ENCODE measurements at regions of chr6 and their contacts with region 1.

Region 1: DNA sequence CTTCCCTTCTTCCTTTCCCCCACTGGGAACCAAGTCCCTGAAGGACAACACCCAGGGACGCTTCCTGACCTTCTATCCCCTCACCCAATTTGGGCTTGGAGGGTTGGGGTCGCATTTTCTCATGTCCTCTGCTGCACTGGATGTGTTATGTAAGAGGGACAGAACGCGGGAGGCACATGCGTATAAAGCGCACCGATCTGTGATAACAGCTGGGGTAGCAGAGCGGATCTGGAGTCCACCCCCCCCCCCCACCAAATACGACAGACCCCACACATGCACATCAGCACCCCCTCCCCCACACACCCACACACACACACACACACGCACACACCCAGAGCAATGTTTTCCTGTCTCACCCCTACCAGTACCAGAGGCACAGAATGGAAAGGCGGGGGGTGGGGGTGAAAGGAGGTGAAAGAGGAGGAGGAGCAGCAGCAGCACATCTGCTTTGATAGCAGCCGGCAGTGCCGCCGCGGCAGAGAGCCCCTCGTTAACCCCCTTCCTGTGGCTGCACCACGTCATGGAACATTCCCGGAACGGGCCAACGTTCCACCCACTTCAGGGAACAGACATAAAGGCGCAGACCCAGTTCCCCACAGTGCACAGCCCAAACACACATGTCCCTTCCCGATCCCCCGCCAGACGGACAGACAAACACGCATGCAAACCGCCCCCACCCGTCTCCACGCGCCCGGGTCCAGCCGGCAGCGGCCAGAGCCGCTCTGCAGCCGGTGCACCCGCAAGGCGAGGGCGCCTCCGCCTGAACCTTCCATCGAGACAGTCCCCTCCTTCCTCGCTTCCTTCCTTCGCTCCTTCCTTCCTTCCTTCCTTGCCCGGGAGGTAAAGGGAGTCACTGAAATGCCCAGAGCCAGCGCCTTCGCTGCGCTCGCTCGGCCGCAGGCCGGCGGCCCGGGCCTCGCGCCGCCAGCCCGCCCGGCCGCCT is 581 bp downstream of the HIVEP2 start:
- DNase-seq: peak; percentile 88
- H3K4me3 ChIP-seq: peak overlapping the region; percentile 90
- CTCF ChIP-seq: no peak

Region 2: GRCh38 chr6:142845624-142846458 is 98.6 kb before region 1 on chr6:
- in situ Hi-C with region 1: loop called (anchors 5 kb)
- DNase-seq: peak; percentile 90
- H3K4me3 ChIP-seq: peak overlapping the region; percentile 15
- CTCF ChIP-seq: no peak

Region 3: DNA sequence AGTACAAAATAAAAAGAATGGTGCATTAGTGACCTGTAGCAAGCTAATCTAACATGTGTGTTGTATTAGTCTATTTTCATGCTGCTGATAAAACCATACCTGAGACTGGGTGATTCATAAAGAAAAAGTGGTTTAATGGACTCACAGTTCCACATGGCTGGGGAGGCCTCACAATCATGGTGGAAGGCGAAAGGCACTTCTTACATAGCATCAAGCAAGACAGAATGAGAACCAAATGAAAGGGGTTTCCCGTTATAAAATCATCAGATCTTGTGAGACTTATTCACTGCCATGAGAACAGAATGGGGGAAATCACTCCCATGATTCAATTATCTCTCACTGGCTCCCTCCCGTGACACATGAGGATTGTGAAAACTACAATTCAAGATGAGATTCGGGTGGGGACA is 70.9 kb after region 1 on chr6:
- in situ Hi-C with region 1: no loop called
- DNase-seq: no peak
- H3K4me3 ChIP-seq: no peak overlapping the region
- CTCF ChIP-seq: no peak

Region 4: GRCh38 chr6:143026696-143027449 is 82.5 kb after region 1 on chr6:
- in situ Hi-C with region 1: no loop called
- DNase-seq: no peak
- H3K4me3 ChIP-seq: no peak overlapping the region
- CTCF ChIP-seq: peak; percentile 51

Region 5: DNA sequence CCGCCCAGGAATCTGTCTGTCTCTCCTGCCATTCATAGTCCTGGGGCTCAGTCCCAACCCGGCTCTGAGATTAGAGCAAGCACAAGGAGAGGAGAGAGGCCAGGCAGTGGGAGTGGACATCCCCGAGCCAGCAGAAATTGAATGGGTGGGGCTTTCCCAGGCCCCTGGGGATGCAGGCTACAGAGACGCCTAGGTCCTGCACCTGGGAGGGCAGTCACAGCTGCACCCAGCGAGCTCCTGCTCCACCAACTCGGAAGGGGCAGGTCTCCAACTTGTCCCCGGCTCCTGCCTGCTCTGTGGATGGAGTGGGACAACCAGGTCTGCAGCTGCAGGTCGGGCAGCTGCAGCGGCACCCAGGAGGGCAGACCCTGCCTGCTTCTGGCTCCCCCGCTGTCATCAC is 105.2 kb after region 1 on chr6:
- in situ Hi-C with region 1: no loop called
- DNase-seq: no peak
- H3K4me3 ChIP-seq: no peak overlapping the region
- CTCF ChIP-seq: no peak

Measured in astrocyte of the cerebellum (primary cell).